ENCODE measurements at regions of chr12 and their contacts with region 1.

Region 1: DNA sequence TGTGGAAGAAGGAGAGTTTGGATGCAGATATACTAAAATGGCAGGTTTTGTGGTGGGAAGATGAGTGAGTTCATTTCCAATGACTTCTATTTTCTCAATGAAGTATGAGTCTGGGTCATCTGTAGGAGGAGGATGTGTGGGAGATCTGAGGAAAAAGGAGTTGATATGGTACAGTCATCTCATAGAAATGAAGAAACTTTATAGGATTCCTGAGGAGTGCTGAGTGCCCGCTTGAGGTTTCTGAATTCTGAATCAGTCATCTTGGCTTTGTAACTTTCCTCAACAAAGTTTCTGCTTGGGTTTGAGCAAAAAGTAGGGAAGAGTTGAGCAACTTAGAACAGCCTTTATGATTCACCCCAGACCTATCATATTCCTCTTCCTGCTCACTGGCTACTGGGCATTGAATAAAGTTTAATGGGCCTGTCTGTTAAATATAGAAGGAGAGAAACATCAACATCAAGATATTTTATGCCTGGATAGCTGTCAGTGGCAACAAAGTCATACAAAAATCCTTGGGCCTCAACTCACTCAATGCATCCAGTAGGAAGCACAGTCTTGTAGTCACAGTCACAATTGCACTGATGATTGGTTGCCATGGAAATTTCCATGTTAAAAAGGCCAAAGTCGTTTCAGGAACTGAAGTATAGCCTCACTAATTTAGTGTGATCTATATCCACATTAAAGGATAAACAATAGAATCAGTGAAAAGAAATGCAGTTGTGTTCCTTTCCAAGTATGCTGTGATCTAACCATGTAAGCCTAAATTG is 284.7 kb downstream of the DUSP6 start:
- DNase-seq: peak; percentile 15
- ATAC-seq: 0 out of 2 replicates have a peak, but pooled peaks have one; percentile 27
- H3K4me3 ChIP-seq: no peak overlapping the region
- H3K27ac ChIP-seq: no peak overlapping the region
- H3K4me1 ChIP-seq: peaks cover 0 to 29% of the 10 kb centered on the region in 2 experiments; a peak in 2 of 4 replicates
- H3K27me3 ChIP-seq: no peaks in the 10 kb centered on the region
- CTCF ChIP-seq: no peak
- POLR2A ChIP-seq: no peak
- RAD21 ChIP-seq: no peak

Region 2: DNA sequence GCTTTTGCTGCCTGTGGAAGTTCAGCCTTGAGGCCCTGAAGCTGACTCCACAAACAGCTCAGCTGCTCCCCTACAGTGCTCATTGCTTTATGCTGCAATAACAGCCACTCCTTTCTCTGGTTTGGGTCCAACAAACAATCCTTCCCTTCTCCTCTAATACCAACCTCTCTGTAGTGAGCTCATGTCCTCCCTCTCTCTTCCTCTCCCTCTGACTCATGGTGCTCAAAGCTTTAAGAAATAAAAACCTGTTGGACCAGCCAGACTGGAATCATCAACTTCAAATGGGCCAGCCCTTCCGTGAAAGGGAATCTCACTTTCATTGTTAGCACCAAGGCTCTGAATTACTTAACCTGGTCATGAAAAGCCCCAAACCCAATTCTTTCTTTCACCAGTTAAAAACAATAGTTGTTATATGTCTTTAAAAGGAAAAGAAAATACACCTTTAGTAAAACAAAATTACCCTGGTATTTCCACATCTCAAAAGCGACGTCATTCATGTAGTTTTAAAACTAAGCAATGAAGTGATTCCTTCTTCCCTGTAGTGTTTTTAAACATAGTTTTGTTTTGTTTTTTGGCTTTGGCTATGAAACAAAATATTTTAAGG is 158.3 kb after region 1 on chr12:
- CTCF ChIA-PET with region 1: no interaction called
- POLR2A ChIA-PET with region 1: no interaction called
- RAD21 ChIA-PET with region 1: no interaction called
- intact Hi-C with region 1: loop called (anchors 10 kb)
- DNase-seq: peak; percentile 97
- ATAC-seq: peak; percentile 91
- H3K4me3 ChIP-seq: peak overlapping the region; percentile 12 to 48; a peak in 3 of 4 replicates
- H3K27ac ChIP-seq: peak overlapping the region; percentile 70
- H3K4me1 ChIP-seq: peaks cover 32 to 49% of the 10 kb centered on the region in 2 experiments
- H3K27me3 ChIP-seq: no peaks in the 10 kb centered on the region
- CTCF ChIP-seq: no peak
- POLR2A ChIP-seq: no peak
- RAD21 ChIP-seq: peak; percentile 49

Measured in HCT116 (cell line).